Activated CD8-positive, alpha-beta memory T cell treated with anti-CD3 and anti-CD28 coated beads, Interleukin-2, amount 10 ng/mL, durations not matched to agents 7 days and 5 days (primary cell): ENCODE measurements at regions of chr17 and their contacts with region 1.

Region 1: DNA sequence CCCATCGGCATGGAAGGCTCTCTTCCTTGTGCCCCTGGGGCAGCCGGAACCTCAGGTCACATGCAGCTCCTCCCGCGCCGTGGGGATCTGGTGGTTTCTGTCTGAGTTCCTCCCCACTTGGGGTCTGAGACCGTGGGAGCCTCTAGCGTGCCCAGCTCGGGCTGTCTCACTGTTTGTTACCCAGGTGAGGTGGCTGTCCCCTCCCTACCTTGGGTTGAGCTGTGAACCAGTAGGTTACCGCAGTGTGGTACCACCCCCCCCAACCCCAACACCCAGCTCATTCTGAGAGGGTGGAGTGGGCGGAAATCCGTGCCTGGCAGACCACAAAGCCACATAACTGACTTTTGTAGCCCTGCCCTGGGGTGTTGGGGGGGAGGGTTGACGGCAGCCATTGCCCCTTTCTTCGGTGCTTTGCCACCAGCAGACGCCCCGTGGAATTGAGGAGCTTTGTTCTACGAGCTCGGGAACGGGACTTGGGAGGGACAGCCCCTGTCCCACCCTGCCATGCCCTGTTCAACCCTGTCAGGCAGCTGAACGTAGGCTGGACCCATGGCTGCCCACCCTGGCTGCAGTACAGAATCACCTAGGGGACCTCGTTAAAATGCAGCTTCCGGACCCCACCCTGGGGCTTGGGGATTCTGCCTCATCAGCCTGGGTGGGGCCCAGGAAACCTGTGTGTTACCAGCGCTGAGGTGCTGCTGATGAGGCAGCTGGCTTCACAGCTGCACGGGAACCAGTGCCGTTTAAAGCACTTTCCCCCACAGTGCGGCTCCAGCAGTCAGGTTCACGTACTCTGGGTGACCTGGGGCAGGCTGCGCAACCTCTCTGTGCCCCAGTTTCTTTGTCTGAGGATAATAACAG is 18.5 kb downstream of the RAP1GAP2 start:
- DNase-seq: peak; percentile 97
- ATAC-seq: peak; percentile 84
- H3K4me3 Mint-ChIP-seq: peak overlapping the region; percentile 64
- H3K27ac Mint-ChIP-seq: peak overlapping the region; percentile 88
- H3K4me1 Mint-ChIP-seq: peaks cover 39% of the 10 kb centered on the region
- H3K27me3 Mint-ChIP-seq: peaks cover 40% of the 10 kb centered on the region

Region 2: DNA sequence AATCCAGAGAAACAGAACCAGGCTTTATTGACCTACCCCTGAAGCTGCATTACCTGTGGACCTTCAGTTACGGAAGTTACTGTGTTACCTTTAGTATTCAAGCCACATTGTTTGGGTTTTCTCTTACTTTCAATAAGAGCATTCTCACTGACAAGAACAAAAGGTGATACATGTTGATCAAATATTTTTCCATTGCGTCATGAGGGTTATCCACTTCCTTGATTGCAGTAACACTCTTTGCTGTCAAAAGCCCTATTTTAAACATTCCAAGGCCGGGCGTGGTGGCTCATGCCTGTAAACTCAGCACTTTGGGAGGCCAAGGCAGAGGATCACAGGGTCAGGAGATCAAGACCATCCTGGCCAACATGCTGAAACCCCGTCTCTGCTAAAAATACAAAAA is 249.8 kb before region 1 on chr17:
- CTCF ChIA-PET with region 1: no interaction called
- DNase-seq: no peak
- ATAC-seq: no peak
- H3K4me3 Mint-ChIP-seq: no peak overlapping the region
- H3K27ac Mint-ChIP-seq: no peak overlapping the region
- H3K4me1 Mint-ChIP-seq: peaks cover 4% of the 10 kb centered on the region
- H3K27me3 Mint-ChIP-seq: no peaks in the 10 kb centered on the region

Region 3: DNA sequence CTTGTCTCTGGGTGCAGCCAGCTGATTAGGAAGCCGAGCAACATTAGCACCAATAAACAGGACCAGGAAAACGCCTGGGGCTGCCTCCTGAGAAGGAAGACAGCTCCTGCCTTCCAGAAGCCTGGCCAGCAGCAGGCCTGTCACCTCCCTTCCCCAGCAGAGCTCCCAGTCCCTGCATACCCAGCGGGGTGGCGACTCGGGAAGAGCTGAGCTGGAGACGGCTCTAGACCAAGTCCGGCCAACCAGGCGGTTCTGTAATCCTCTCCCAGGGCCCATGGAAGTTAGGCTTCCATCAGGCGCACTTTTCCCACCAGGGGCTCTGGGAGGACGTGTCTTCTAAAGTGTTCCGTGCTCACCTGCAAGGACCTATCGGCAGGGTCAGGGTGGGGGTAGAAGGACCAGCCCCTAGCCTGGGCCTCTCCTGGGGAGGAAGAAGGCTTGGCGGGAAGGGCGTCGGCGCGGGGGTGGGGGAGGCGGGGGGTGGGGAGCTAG is 91.2 kb before region 1 on chr17:
- CTCF ChIA-PET with region 1: no interaction called
- DNase-seq: no peak
- ATAC-seq: no peak
- H3K4me3 Mint-ChIP-seq: no peak overlapping the region
- H3K27ac Mint-ChIP-seq: no peak overlapping the region
- H3K4me1 Mint-ChIP-seq: peaks cover 3% of the 10 kb centered on the region
- H3K27me3 Mint-ChIP-seq: peaks cover 35% of the 10 kb centered on the region

Region 4: DNA sequence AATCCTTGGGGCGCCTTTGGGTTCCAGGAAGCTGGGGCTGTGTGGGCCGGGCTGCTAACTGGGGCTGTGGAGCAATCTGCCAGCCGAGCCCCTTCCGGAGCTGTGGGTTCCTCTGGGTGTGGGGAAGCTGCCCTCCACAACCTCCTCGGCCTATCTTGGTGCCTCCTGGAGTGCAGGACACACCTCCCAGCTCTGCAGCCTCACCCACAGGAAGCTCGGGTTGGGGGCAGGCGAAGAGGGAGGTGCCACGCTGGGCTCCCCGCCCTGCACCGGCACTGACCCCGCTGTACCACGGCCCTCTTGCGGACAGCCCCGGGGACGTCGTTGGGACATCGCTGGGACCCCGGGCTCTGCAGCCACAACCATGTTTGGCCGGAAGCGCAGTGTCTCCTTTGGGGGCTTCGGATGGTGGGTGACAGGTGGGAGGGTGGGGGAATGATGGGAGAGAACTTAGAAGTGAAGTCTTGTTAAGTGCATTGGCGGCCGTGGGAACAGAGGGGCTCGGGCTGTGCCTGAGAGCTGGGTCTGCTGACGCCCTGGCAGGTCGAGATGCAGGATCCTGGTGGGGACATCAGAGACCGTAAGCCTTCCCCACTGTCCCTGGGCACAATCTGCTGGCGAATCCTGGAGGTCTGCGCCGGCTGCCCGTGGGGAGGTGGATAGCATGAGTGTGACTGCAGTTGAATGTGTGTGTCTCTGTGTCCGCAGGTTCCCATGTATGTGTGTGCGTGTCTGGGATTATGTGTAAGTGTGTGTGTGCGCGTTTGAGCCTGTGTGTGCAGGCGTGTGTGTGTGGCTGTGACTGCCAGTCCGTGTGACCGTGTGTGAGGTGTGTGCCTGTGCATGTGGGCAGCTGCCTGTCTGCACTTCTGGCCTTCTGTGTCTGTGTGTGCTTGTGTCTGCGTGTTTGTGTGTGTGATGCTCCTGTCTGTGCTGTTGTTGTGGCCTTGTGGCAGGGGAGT is 18.3 kb before region 1 on chr17 and contains the start of gene RAP1GAP2:
- CTCF ChIA-PET with region 1: interaction called, 120 read pairs
- DNase-seq: peak; percentile 91
- ATAC-seq: peak; percentile 80
- H3K4me3 Mint-ChIP-seq: peak within 1 kb of the TSS; percentile 87
- H3K27ac Mint-ChIP-seq: peak within 1 kb of the TSS; percentile 59
- H3K4me1 Mint-ChIP-seq: peaks cover 72% of the 10 kb centered on the region
- H3K27me3 Mint-ChIP-seq: peaks cover 61% of the 10 kb centered on the region
- total RNA-seq, gene RAP1GAP2: 6.5 to 26.2 TPM

Region 5: DNA sequence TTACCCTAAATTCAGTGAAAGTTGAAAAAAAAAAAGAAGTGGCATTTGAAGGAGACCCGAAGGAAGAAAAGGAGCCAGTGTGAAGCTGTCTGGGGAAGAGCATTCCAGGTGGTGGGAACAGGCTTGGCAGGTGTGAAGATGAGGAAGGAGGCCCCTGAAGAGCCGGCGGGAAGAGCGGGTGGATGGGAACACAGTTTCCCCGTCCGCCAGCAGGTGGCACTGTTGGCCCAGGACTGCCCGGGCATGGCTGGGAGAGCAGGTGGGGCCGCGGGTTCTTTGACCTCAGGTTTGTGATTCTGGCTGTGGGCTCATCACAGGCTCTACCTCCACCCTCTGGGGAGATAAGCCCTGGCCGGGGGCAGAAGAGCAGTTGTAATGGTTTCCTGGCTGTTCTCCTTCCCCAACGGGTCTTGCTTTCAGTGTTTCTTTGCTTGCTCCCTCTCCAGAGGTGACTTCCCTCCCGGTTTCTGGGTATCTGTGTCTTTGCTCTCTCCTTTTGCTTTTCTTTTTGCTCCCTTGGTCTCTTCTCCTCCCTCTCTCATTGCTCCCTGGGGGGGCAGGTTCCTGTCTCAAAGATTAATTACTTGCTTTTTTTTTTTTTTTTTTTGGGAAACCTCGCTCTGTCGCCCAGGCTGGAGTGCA is 13.8 kb after region 1 on chr17:
- CTCF ChIA-PET with region 1: interaction called, 22 read pairs
- DNase-seq: peak; percentile 82
- ATAC-seq: peak; percentile 92
- H3K4me3 Mint-ChIP-seq: no peak overlapping the region
- H3K27ac Mint-ChIP-seq: no peak overlapping the region
- H3K4me1 Mint-ChIP-seq: peaks cover 14% of the 10 kb centered on the region
- H3K27me3 Mint-ChIP-seq: peaks cover 19% of the 10 kb centered on the region

Region 6: GRCh38 chr17:2847381-2848333 is 32.9 kb after region 1 on chr17:
- CTCF ChIA-PET with region 1: interaction called, 10 read pairs
- DNase-seq: no peak
- ATAC-seq: no peak
- H3K4me3 Mint-ChIP-seq: no peak overlapping the region
- H3K27ac Mint-ChIP-seq: no peak overlapping the region
- H3K4me1 Mint-ChIP-seq: peaks cover 11% of the 10 kb centered on the region
- H3K27me3 Mint-ChIP-seq: peaks cover 28% of the 10 kb centered on the region